Left cardiac atrium (tissue), 4 donors: ENCODE measurements at regions of chr11 and their contacts with region 1.

Region 1: DNA sequence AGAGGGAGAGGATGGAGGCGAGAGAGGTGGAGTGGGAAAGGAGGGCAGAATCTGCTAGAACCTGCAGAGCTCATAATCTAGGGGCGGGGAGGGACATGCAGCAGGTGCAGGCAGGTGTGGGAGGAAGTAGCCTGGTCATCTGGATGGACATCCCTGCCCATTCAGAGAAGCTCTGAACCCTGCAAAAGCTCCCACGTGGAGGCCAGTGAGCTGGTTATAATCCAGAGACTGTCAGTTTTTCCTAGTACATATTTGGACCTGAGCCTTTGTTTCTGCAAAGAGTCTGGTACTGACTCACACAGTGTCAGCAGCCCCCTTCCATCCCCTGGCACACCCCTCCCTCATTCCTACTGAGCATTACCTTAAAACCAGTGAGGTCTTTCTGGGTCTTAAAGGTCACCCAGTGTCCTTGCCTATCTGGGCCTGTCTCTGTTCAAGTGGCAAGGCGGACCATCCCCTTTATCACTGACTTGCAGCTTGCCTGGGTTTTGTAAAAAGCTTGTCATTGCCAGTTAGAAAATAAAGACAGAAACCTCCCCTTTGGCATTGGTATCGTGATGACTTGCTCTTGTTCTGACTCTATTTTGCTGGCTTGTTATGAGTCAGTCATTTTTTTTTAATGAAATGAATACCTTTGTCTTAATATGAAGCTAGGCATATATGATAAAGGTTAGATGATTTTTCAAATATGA is 26.1 kb downstream of the PTPRJ start:
- DNase-seq: no peak
- ATAC-seq: peak; percentile 16 to 84

Region 2: DNA sequence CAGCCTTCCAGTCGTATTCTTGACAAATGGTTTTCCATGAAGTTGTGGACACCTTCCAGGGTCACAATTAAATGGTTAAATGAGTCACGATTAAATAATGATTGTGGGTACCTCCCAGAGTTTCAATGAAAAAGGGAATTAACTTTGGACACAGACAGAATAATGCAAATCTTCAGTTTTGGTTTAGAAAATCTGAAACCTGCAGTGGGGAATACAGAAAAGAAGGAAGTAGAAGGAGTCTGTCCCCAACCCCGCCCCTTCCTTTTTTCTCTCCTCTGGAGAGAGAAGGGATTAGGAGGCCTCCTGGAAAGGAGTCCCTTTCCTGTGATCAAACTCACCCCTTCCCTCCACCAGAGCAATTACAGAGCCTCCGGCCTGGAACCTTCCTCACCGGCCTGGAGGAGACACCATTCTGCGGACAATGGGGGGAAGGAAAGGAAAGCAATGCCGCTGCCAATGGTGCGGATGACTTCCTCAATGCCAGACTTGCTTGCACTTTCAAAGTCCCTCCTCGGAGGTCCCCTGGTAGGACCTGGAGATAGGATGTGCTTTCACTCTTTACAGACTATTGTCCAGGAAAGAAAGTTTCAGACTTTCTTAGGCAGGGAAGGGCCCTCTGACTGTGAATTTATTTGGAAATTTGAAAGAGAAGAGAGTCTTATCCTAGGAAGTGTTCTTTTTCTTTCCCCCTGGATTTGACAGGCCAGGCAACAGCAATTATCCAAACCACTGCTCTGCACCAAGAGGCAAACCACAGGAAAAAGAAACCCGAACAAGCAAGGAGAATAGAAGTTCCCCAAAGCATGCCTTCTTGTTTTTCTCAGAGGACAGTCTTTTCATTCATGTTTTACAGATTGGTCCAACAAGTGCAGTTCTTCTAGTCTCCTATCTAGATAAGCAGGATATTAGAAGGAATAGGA is 60.7 kb after region 1 on chr11:
- intact Hi-C with region 1: loop called in 1 of 2 experiments (anchors 5 kb)
- DNase-seq: no peak
- ATAC-seq: peak; percentile 19 to 40